ENCODE measurements at regions of chr13 and their contacts with region 1.

Region 1: GRCh38 chr13:75803164-75803611 is 167.1 kb downstream of the LMO7 start:
- DNase-seq: peak in 7 of 9 donors; percentile 40 to 68 (median 62)
- ATAC-seq: peak; percentile 95
- H3K4me3 ChIP-seq: peak overlapping the region; percentile 4
- H3K4me3 Mint-ChIP-seq: peak overlapping the region; percentile 4 to 85 (median 78)
- H3K27ac ChIP-seq: peak overlapping the region; percentile 60
- H3K27ac Mint-ChIP-seq: peak overlapping the region in 8 of 9 donors; percentile 88 to 97 (median 92)
- H3K4me1 ChIP-seq: peaks cover 0 to 33% of the 10 kb centered on the region in 2 donors
- H3K4me1 Mint-ChIP-seq: peaks cover 15 to 70% (median 49%) of the 10 kb centered on the region in 7 donors
- H3K27me3 ChIP-seq: no peaks in the 10 kb centered on the region
- H3K27me3 Mint-ChIP-seq: no peaks in the 10 kb centered on the region

Region 2: DNA sequence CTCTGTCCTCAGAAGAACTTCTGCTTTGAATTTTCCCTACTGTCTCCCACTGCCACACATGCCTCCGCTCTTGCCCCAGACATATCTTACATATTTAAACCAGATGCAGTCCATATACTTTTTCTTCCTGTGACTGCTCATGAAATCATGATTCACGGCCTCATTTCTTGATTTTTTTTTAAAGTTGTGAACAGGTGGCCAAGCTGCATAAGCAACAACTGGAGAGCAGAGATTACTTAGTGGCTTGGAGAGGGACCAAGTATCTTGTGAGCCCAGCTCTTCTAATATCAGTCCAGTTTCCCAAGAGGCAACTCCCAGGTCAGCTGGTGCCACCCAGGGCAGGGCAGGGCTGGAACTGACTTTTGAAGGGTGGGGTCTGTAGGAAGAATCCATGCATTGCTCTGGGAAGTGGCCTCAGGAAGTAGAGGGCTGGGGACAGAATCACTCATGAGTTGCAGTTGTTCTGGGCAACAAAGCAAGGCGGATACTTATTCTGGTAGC is 14.7 kb before region 1 on chr13:
- CTCF ChIA-PET with region 1: interaction called, 3 read pairs
- POLR2A ChIA-PET with region 1: interaction called, 3 read pairs
- intact Hi-C with region 1: loop called in 1 of 2 experiments (anchors 2 kb)
- DNase-seq: no peak
- ATAC-seq: no peak
- H3K4me3 ChIP-seq: no peak overlapping the region
- H3K4me3 Mint-ChIP-seq: no peak overlapping the region
- H3K27ac ChIP-seq: no peak overlapping the region
- H3K27ac Mint-ChIP-seq: no peak overlapping the region
- H3K4me1 ChIP-seq: no peaks in the 10 kb centered on the region
- H3K4me1 Mint-ChIP-seq: peaks cover 0 to 46% (median 29%) of the 10 kb centered on the region in 7 donors
- H3K27me3 ChIP-seq: no peaks in the 10 kb centered on the region
- H3K27me3 Mint-ChIP-seq: no peaks in the 10 kb centered on the region

Region 3: GRCh38 chr13:75841905-75842304 is 38.7 kb after region 1 on chr13:
- CTCF ChIA-PET with region 1: no interaction called
- POLR2A ChIA-PET with region 1: no interaction called
- intact Hi-C with region 1: loop called in 1 of 2 experiments (anchors 5 kb)
- DNase-seq: peak in 5 of 9 donors; percentile 8 to 39 (median 25)
- ATAC-seq: no peak
- H3K4me3 ChIP-seq: no peak overlapping the region
- H3K4me3 Mint-ChIP-seq: peak overlapping the region in 1 of 10 donors; percentile 5
- H3K27ac ChIP-seq: no peak overlapping the region
- H3K27ac Mint-ChIP-seq: peak overlapping the region in 8 of 9 donors; percentile 12 to 92 (median 72)
- H3K4me1 ChIP-seq: peaks cover 0 to 8% of the 10 kb centered on the region in 2 donors
- H3K4me1 Mint-ChIP-seq: peaks cover 8 to 43% (median 23%) of the 10 kb centered on the region in 7 donors
- H3K27me3 ChIP-seq: no peaks in the 10 kb centered on the region
- H3K27me3 Mint-ChIP-seq: no peaks in the 10 kb centered on the region

Region 4: DNA sequence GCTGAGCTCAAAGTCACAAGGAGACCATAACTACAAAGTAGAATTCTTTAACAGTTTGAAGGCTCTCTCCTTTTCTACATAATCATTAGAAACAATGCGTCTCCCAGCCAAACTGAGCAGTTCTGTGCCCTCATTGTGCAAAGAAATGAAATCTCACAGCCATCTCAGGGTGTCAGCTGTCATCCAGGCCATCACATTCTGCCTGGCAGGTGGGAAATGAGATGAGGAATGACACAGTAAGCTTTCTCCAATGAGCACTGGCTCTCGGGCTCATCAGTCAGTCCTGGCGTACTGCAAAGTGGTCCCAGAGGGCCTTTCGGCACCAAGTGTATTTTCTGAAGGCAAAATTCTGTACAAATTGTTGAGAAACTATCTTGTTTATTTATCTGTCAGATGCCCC is 776.5 kb after region 1 on chr13:
- CTCF ChIA-PET with region 1: no interaction called
- POLR2A ChIA-PET with region 1: no interaction called
- intact Hi-C with region 1: no loop called
- DNase-seq: no peak
- ATAC-seq: no peak
- H3K4me3 ChIP-seq: no peak overlapping the region
- H3K4me3 Mint-ChIP-seq: no peak overlapping the region
- H3K27ac ChIP-seq: no peak overlapping the region
- H3K27ac Mint-ChIP-seq: no peak overlapping the region
- H3K4me1 ChIP-seq: no peaks in the 10 kb centered on the region
- H3K4me1 Mint-ChIP-seq: no peaks in the 10 kb centered on the region
- H3K27me3 ChIP-seq: no peaks in the 10 kb centered on the region
- H3K27me3 Mint-ChIP-seq: peaks cover 0 to 14% (median 11%) of the 10 kb centered on the region in 5 donors